Left lung (tissue), 14 donors: ENCODE measurements at regions of chr3 and their contacts with region 1.

Region 1: GRCh38 chr3:49539659-49540560 is 14.4 kb upstream of the BSN start:
- DNase-seq: peak; percentile 92 to 100 (median 96)
- ATAC-seq: peak; percentile 99
- H3K4me3 ChIP-seq: peak overlapping the region; percentile 40 to 45
- H3K27ac ChIP-seq: peak overlapping the region; percentile 82 to 83
- H3K4me1 ChIP-seq: peaks cover 4 to 8% of the 10 kb centered on the region in 2 donors
- H3K27me3 ChIP-seq: no peaks in the 10 kb centered on the region
- CTCF ChIP-seq: peak; percentile 78 to 92

Region 2: DNA sequence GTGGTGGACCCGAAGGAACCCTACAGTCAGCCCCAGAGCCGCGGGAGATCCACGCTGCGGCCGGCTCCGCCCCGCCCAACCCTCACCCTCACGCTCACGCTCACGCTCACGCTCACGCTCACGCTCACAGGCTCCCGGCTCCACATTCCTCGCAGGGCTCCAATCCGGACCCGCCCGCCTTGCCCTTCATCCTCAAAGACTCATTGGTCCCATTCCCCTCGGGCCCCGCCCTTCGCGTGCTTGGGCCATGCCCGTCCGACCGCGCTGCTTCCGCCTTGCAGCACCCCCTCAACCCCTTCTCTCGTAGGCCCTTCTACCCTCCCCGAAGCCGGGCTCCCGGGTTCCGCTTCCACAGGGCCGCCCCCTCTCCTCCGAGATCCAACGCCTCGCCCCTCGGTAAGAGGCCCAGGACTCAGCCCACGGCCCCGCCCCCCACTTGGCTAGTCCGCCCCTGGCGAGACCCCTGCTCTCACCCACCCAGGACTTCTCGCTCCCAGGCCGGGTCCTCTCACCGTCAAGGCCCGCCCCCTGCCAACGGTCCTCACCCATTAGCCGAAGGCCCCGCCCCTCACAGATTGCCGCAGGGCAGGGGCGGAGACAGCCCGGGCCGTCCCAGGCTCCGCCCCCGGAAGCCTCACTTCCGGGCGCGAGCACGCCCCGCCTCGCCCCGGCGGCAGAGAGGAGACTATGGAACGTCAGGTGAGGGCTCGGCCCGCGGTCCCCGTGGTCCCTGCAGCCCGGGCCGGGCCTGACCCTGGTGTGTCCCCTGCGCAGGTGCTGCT is 134.0 kb after region 1 on chr3 and contains the start of gene APEH:
- intact Hi-C with region 1: loop called in 1 of 2 experiments (anchors 5 kb)
- DNase-seq: peak; percentile 92 to 99 (median 96)
- ATAC-seq: peak; percentile 95
- H3K4me3 ChIP-seq: peak within 1 kb of the TSS; percentile 72 to 97
- H3K27ac ChIP-seq: peak within 1 kb of the TSS; percentile 86 to 97
- H3K4me1 ChIP-seq: peaks cover 7 to 32% of the 10 kb centered on the region in 2 donors
- H3K27me3 ChIP-seq: no peaks in the 10 kb centered on the region
- CTCF ChIP-seq: no peak
- polyA plus RNA-seq, gene APEH: 88.6 to 108 (median 99.8) TPM

Region 3: GRCh38 chr3:49689046-49689907 is 149.4 kb after region 1 on chr3 and contains the starts of genes MST1 and RNF123:
- intact Hi-C with region 1: no loop called
- DNase-seq: peak; percentile 87 to 97 (median 95)
- ATAC-seq: peak; percentile 74
- H3K4me3 ChIP-seq: peak within 1 kb of the TSS; percentile 98 to 99
- H3K27ac ChIP-seq: peak within 1 kb of the TSS; percentile 55 to 82
- H3K4me1 ChIP-seq: peaks cover 9 to 44% of the 10 kb centered on the region in 2 donors
- H3K27me3 ChIP-seq: peaks cover 0 to 23% of the 10 kb centered on the region in 2 donors
- CTCF ChIP-seq: no peak
- polyA plus RNA-seq, gene MST1: 31.0 to 59.7 (median 39.8) TPM
- polyA plus RNA-seq, gene RNF123: 21.8 to 33.1 (median 30.4) TPM